ENCODE measurements at regions of chr13 and their contacts with region 1.

Region 1: GRCh38 chr13:26221721-26222519 is at the start of gene RNF6:
- DNase-seq: peak; percentile 83
- H3K4me3 Mint-ChIP-seq: peak within 1 kb of the TSS; percentile 99
- H3K27ac Mint-ChIP-seq: peak within 1 kb of the TSS; percentile 100
- H3K4me1 Mint-ChIP-seq: peaks cover 38% of the 10 kb centered on the region
- H3K27me3 Mint-ChIP-seq: no peaks in the 10 kb centered on the region
- total RNA-seq, gene RNF6: 53.2 and 54.9 TPM in 2 replicates

Region 2: DNA sequence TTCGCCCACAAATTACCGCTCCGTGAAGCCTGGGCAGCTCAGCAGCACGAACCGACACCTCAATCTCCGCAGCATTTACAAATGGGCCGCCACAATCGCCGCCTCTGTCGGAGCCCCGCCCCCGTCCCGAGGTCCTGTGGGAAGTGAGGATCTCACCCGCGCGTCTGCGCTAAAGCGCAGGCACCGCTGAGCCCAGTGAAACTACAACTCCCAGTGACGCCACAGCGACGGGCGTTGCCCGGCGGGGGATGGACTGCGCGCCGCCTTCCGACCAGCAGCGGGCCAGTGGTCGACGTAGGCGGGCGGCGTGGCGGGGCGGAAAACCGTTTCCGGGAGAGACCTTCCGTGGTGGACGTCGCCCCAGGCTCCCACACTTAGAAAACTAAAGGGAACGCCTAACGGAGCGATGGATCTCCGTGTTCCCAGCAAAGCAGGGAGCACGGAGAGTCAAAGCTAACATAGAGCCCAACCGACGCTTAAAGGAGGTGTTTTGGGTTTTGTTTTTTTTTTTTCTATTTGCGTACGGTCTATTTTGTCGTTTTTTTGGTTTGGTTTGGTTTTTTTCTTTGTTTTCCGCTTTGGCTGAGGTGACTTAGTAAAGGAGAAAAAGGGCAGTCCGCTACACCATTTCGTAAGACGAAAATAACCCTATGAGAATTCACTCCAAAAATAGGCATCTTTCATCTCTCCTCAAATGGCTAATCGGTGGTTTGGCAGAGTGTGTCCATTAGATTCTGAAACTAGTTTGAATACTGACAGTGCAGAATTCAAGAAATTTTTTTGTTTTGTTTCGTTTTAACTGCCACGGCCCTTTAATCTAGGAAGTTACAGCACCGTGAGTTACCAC is 1299.0 kb before region 1 on chr13:
- intact Hi-C with region 1: loop called (anchors 5 kb)
- DNase-seq: peak; percentile 95
- H3K4me3 Mint-ChIP-seq: peak overlapping the region; percentile 95
- H3K27ac Mint-ChIP-seq: peak overlapping the region; percentile 92
- H3K4me1 Mint-ChIP-seq: peaks cover 14% of the 10 kb centered on the region
- H3K27me3 Mint-ChIP-seq: peaks cover 2% of the 10 kb centered on the region

Region 3: DNA sequence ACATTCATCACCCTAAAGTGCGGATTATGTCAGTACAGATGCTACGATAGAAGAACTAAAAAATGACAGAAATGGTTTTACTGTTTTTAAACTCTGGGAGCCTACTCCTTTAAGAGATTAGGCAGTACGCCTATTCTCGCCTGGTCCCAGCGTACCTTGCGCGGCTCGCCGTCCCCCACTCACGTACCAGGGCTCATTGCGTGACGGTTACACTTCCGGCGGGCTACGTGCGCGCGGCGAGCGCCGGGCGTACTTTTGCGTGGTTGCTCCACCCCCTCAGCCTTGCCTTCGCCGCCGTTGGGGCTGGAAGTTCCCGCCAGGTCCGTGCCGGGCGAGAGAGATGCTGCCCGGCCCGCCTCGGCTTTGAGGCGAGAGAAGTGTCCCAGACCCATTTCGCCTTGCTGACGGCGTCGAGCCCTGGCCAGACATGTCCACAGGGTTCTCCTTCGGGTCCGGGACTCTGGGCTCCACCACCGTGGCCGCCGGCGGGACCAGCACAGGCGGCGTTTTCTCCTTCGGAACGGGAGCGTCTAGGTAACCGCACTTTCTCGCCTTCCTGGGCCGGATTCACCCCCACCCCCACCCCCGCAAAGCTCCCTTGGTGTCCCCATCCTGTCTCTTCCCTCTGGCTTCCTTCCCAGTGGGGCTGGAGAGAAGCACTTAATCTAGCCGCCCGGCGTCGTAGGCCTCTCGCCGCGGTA is 920.4 kb before region 1 on chr13 and contains the start of gene NUP58:
- intact Hi-C with region 1: loop called (anchors 2 kb)
- DNase-seq: peak; percentile 94
- H3K4me3 Mint-ChIP-seq: peak within 1 kb of the TSS; percentile 96
- H3K27ac Mint-ChIP-seq: peak within 1 kb of the TSS; percentile 94
- H3K4me1 Mint-ChIP-seq: peaks cover 35% of the 10 kb centered on the region
- H3K27me3 Mint-ChIP-seq: peaks cover 5% of the 10 kb centered on the region
- total RNA-seq, gene NUP58: 131 and 142 TPM in 2 replicates

Region 4: DNA sequence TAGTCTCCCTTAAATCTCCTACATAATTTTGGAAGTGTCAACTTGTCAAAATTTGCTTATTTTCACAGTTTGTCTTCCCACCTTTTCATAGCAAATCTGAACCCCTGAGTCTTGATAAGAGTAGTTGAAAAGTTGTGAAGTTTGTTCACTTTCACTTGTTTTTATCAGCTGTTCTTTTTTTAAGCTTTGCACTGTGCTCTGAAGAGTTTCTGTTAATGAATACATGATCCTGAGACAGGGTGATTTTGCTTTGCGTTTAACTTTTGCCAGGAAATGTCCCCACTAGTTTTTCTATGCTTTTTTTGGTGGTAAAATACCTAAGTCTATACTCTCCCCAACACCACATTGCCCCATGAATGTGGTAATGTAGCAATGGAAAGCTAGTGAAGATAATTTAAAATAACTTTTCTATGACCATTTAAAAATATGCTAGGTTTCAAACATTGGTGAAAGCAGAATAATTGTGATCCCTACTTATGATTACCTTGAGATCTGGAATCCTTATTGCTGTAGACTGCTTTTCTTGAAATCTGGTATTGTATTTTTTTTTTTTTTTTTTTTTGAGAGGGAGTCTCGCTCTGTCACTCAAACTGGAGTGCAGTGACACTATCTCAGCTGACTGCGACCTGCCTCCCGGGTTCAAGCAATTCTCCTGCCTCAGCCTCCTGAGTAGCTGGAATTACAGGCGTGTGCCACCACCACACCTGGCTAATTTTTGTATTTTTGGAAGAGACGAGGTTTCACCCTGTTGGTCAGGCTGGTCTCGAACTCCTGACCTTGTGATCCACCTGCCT is 915.1 kb before region 1 on chr13:
- intact Hi-C with region 1: loop called (anchors 2 kb)
- DNase-seq: no peak
- H3K4me3 Mint-ChIP-seq: no peak overlapping the region
- H3K27ac Mint-ChIP-seq: peak overlapping the region; percentile 29
- H3K4me1 Mint-ChIP-seq: peaks cover 39% of the 10 kb centered on the region
- H3K27me3 Mint-ChIP-seq: no peaks in the 10 kb centered on the region

Region 5: DNA sequence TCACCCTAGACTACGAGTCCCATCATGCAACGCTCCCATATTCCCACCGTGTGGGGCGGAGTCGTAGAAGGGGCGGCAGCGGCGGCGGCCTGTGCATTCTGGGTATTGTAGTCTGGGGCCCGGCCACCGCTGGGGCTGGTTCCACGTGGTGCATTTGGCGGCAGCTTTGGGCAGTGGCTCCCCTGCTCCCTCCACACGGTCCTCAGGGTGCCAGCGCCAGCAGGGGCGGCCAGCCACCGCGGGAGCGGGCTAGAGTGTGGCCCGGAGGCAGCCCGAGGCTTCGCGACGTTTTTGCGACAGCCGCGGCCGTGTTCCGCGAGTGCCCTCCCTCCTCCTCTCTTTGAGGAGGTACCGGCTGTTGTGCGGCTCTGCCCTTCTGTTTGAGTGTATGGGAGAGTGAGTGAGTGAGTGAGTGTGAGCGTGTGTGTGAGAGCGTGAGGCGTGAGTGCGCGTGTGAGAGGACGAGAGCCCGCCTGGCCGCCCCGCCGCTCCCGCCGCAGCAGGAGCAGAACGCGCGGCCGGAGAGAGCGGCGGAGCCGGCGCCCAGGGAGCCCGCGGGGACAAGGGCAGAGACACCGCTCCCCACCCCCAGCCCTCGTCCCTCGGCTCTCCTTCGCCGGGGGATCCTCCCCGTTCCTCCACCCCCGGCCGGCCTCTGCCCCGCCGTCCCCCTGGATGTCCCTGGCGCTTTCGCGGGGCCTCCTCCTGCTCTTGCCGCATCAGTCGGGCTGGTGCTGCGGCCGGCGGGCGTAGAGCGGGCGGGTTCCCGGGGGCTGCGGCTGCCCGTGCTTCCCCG is 32.1 kb after region 1 on chr13 and contains the start of gene CDK8:
- intact Hi-C with region 1: loop called (anchors 1 kb)
- DNase-seq: peak; percentile 80
- H3K4me3 Mint-ChIP-seq: peak within 1 kb of the TSS; percentile 91
- H3K27ac Mint-ChIP-seq: peak within 1 kb of the TSS; percentile 88
- H3K4me1 Mint-ChIP-seq: peaks cover 25% of the 10 kb centered on the region
- H3K27me3 Mint-ChIP-seq: peaks cover 2% of the 10 kb centered on the region
- total RNA-seq, gene CDK8: 18.4 and 18.9 TPM in 2 replicates

Region 6: DNA sequence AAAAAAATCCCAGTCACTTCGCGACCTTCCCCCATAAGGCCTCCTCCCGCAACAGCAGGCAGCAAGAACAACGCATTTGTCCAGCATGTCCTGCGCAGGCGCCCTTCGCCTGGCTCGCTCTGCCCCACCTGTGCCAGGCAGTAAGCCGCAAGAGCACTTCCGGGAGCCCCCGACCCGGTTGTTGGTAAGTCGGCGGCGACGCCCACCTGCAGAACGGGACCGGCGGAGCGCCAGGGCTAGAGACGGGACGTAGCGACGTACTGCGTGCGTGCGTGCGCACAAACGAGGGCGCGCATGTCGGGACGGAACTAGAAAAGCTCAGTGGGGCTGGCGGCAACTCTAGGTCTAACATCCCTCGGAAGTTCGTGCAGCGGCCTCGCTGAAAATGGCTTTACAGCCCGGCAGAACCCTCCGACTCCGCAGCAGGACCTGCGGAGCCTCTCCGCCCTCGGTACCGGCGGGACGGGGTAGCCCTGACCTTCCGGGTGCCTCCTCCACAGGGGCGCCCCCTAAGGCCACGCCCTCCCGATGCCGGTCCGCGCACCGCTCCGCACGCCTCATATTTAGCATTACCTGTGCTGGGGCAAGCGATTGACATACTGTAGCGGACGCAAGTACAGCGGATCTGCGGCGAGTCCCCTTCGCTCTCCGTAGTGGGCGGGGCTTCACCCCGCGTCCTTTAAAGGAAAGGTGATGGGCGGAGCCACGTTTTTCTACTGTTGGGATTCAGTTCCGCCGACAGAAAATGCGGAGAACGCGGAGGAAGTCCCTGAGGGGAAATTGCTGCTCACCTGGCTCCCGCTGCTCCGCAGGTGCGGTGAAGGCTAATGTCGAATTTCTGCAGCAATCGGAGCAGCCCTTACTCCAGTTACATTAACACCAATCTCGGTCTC is 1228.3 kb after region 1 on chr13 and contains the start of gene MTIF3:
- intact Hi-C with region 1: loop called (anchors 1 kb)
- DNase-seq: peak; percentile 95
- H3K4me3 Mint-ChIP-seq: peak within 1 kb of the TSS; percentile 91
- H3K27ac Mint-ChIP-seq: peak within 1 kb of the TSS; percentile 93
- H3K4me1 Mint-ChIP-seq: peaks cover 58% of the 10 kb centered on the region
- H3K27me3 Mint-ChIP-seq: no peaks in the 10 kb centered on the region
- total RNA-seq, gene MTIF3: 30.4 and 36.0 TPM in 2 replicates

Region 7: DNA sequence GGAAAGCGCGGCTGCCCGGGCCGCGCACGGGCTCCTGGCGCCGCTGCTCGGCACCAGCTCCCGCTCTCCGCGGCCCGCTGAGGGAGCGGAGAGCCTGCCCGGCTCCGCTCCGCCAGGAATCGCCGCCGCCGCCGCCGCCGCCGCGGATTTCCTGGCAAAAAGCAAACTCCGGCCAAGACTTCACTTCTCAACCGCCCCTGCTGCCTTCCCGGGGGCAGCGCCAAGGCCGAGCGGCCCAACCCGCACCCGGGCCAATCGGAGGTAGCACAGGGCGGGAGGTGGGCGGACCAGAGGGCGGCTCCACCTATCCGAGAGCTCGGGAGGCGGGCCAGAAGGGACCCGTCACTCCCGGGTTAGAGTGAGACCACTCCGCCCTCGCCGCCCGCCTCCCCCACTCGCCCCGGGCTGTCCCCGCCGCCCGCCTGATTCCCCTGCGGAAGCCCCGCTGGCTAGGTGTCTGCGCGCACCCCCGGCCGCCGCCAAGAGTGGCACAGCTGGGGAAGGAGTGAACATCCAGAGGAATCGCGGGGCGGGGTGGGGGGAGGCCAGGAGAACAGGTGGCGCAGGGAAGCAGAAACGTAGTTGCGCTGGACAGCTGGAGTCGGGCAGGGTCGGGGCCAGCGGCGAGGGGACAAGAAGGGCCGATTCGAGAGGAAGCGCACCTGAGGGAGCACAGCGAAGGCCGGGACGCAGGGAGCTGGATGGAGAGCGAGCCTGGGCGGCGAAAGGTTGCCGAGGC is 1398.6 kb after region 1 on chr13 and contains the start of gene LNX2:
- intact Hi-C with region 1: loop called (anchors 5 kb)
- DNase-seq: peak; percentile 97
- H3K4me3 Mint-ChIP-seq: peak within 1 kb of the TSS; percentile 88
- H3K27ac Mint-ChIP-seq: peak within 1 kb of the TSS; percentile 88
- H3K4me1 Mint-ChIP-seq: peaks cover 57% of the 10 kb centered on the region
- H3K27me3 Mint-ChIP-seq: no peaks in the 10 kb centered on the region
- total RNA-seq, gene LNX2: 4.1 and 4.5 TPM in 2 replicates